Caco-2 (cell line): ENCODE measurements at regions of chr20 and their contacts with region 1.

Region 1: DNA sequence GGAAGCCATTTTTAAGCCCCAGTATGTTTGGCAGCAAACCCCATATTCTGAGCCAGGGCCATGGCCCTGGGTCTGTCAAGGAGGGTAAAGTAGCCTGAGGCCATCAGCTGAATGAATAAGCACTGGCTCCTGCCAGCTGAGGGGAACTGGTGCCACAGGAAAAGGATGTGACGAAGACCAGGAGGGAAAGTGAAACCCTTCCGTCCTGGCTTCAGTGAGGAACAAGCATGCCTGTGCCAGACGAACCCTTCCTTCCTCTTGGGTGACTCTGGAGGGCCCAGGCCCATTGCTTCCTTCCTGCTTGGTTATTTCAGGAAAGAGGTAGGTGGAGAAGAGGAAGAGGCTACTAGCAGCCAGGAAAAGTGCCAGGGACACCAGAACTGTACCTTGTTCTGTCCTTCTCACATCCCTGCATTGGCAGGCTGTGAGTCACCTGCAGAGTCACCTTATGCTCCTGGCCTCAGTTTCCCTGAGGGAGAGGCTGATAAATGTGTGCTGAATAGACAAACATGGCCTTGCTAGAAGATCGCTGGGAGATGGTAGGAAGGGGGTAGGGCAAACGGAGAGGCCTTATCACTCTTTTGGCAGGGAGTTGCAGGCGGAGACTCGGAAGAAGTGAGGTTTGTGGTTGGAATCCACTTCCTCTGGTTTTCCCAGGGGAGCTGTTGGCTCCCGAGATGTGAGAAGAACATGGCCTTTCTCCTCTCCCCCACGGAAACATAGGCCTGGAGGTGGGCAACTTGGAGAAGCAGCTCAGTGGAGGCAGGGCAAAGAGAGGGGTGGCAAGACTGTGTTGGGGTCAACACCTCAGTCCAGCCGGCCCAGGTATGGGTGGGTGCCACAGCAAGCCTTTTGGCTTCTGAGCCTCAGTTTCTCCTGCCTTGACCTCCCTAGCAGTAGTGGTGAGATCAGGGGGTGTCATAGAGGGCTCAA is 37.4 kb downstream of the COX4I2 start:
- DNase-seq: no peak
- H3K4me3 ChIP-seq: no peak overlapping the region
- H3K4me3 Mint-ChIP-seq: peak overlapping the region; percentile 26
- H3K27ac Mint-ChIP-seq: peak overlapping the region; percentile 81
- H3K4me1 ChIP-seq: peaks cover 78% of the 10 kb centered on the region
- H3K4me1 Mint-ChIP-seq: peaks cover 72% of the 10 kb centered on the region
- H3K27me3 ChIP-seq: no peaks in the 10 kb centered on the region
- H3K27me3 Mint-ChIP-seq: no peaks in the 10 kb centered on the region
- CTCF ChIP-seq: no peak

Region 2: GRCh38 chr20:31698803-31699718 is 23.9 kb after region 1 on chr20:
- CTCF ChIA-PET with region 1: interaction called, 6 read pairs
- POLR2A ChIA-PET with region 1: interaction called, 14 read pairs
- intact Hi-C with region 1: loop called (anchors 1 kb)
- DNase-seq: peak in 1 of 2 experiments; percentile 57
- H3K4me3 ChIP-seq: no peak overlapping the region
- H3K4me3 Mint-ChIP-seq: peak overlapping the region; percentile 44
- H3K27ac Mint-ChIP-seq: peak overlapping the region; percentile 89
- H3K4me1 ChIP-seq: peaks cover 94% of the 10 kb centered on the region
- H3K4me1 Mint-ChIP-seq: peaks cover 73% of the 10 kb centered on the region
- H3K27me3 ChIP-seq: no peaks in the 10 kb centered on the region
- H3K27me3 Mint-ChIP-seq: no peaks in the 10 kb centered on the region
- CTCF ChIP-seq: no peak

Region 3: DNA sequence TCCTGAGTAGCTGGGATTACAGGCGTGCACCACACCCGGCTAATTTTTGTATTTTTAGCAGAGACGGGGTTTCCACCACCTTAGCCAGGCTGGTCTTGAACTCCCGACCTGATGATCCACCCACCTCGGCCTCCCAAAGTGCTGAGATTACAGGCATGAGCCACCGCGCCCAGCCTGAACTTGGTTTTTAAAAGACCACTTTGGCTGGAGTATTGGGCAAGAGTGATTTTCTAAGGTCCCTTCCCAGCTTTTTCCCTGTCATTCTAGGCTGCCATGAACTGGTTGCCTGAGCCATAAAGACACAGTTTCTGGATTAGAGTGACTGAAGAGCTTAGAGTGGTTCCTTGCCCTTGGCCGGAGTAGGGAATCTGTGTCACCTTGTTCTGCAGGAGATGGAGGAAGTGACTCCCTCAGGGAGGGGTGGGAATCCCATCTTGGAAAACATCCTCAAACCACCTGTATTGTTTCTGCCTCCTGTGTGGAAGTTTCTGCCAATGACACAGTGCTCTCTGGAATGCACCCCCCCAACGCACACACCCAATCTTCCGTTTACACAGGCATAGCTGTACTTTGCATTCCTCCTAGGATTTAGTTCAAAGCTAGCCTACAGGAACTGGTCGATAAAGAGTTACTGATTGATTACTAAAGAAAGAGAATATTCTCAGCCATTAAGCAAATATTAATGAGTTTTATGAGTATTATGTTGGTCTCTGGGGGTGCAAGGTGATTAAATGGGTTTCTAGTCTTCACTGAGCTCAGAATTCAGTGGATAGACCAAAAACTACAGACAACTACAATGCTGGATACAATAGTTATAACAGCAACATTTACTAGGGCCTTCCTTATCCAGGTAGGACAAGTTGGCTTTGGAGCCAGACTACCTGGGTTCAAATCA is 29.3 kb after region 1 on chr20:
- CTCF ChIA-PET with region 1: interaction called, 6 read pairs
- POLR2A ChIA-PET with region 1: interaction called, 14 read pairs
- intact Hi-C with region 1: loop called (anchors 1 kb)
- DNase-seq: peak; percentile 99 to 100
- H3K4me3 ChIP-seq: no peak overlapping the region
- H3K4me3 Mint-ChIP-seq: peak overlapping the region; percentile 48
- H3K27ac Mint-ChIP-seq: peak overlapping the region; percentile 98
- H3K4me1 ChIP-seq: peaks cover 93% of the 10 kb centered on the region
- H3K4me1 Mint-ChIP-seq: peaks cover 74% of the 10 kb centered on the region
- H3K27me3 ChIP-seq: no peaks in the 10 kb centered on the region
- H3K27me3 Mint-ChIP-seq: no peaks in the 10 kb centered on the region
- CTCF ChIP-seq: no peak